ENCODE measurements at regions of chr2 and their contacts with region 1.

Region 1: DNA sequence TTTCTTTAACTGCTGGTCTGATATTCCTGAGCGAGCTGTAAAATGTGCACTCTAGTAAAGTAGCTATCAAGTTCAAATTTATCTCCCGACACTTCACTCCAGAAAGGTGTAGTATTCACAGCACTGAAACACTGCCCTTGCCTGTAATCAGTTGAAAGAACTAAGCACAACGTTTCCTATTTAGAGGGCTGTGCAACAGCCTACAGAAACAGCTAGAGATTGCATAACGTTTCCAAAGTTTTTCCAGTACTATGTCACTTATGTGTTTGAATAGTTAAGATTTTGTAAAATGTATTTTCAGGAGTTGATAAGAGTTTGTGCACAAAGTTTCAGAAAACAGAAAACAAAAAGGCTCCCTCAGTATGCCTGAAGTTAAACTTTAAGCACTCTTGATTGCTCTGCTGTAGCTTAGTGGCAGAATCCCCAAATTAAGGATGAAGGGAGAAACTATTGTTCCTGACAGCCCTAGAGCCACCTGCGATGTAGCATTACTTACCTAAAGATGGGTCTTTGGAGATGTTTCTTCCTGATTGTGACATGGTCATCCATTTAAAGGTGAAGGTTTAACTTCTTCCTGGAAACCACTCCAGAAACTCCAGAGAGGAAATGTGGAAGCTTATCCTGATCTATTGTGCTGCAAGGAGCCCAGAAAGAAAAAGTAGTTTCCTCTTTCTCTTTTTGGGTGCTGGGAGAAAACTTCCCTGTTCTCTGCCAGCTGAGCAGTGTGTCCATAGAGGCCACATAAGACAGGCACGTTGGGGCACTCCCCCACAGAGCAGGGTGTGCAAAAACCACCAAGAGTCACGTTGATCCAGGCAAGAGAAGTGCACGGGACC is 536 bp downstream of the PDE1A start:
- DNase-seq: no peak
- H3K4me3 ChIP-seq: peak overlapping the region; percentile 52 to 68
- H3K27ac ChIP-seq: peak overlapping the region; percentile 67 to 79
- H3K4me1 ChIP-seq: peaks cover 0 to 31% (median 4%) of the 10 kb centered on the region in 4 donors
- H3K27me3 ChIP-seq: no peaks in the 10 kb centered on the region
- CTCF ChIP-seq: no peak

Region 2: DNA sequence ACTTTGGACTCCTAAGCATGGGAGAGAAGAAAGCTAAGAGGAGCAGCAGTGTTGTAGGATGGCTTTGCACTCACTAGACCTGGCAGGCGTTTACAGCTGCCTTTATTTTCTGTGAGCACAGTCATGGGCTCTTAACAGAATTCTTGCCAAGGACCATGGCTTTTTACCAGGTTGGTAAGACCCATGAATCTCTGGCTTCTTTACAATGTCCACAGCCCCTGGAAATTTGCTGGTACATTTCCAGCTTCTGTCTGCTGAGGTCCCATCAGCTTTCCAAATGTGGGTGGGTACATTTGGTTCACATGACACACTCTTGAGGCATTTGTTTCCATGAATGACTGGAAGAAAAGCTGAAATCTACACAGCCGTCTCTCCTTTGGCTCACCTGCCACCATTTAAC is 278.0 kb before region 1 on chr2:
- intact Hi-C with region 1: no loop called
- DNase-seq: peak; percentile 32 to 71
- H3K4me3 ChIP-seq: no peak overlapping the region
- H3K27ac ChIP-seq: peak overlapping the region; percentile 42 to 52
- H3K4me1 ChIP-seq: peaks cover 0 to 39% (median 13%) of the 10 kb centered on the region in 4 donors
- H3K27me3 ChIP-seq: no peaks in the 10 kb centered on the region
- CTCF ChIP-seq: no peak

Region 3: DNA sequence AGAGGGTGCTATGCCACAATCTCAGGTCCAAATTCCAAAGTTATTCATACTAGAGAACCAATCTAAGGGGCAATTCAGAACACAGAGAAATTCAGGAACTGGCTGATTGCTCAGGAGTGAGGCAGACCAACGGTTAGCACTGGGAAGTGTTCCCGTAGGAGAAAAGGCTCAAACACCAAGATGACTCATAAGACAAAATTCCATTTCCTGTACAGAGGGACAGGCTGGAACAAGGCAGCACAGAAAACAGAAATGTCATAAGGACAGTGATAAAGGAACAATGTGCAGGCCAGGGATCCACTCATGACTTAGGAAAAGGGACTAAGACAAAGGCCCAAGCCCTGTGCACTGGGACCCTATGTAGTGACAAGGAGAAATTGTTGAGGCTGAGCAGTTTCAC is 53.6 kb before region 1 on chr2:
- intact Hi-C with region 1: loop called (anchors 10 kb)
- DNase-seq: peak in 1 of 2 donors; percentile 73
- H3K4me3 ChIP-seq: no peak overlapping the region
- H3K27ac ChIP-seq: peak overlapping the region; percentile 85
- H3K4me1 ChIP-seq: peaks cover 0 to 60% (median 12%) of the 10 kb centered on the region in 4 donors
- H3K27me3 ChIP-seq: no peaks in the 10 kb centered on the region
- CTCF ChIP-seq: no peak